ENCODE measurements at regions of chr17 and their contacts with region 1.

Region 1: DNA sequence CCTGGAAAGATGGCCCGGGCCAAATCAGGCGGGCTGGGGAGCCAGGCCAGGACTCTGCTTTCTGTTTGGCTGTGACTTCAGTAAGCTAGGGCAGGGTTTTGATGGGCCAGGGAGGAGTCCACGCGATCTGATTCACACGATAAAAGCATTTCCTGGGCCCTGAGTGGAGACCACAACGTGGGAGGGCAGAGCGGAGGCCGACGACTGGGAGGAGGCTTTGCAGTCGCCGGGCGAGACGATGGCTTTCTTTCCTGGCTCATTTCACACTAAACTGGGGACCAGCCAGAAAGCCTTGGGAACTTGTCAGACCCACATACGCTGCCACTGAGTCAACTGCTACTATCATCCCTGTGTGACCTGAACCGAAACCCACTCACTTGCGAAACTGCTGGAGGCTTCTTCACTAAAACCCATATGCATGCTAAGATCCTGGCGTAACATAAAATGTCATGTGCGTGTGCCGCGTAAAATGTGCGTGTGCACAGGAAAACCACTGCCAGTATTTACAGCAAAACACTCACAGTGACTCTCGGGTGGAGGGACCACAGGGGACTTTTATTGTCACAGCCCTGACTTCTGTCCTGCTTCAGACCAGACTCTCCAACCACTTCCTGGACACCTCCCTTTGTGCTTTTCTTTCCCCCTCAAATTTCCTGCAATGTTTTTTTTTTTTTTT is 14.2 kb upstream of the RHBDF2 start:
- DNase-seq: peak; percentile 54
- ATAC-seq: peak; percentile 84
- H3K4me3 Mint-ChIP-seq: peak overlapping the region; percentile 71
- H3K27ac Mint-ChIP-seq: peak overlapping the region; percentile 93
- H3K4me1 Mint-ChIP-seq: peaks cover 23% of the 10 kb centered on the region
- H3K27me3 Mint-ChIP-seq: peaks cover under 1% of the 10 kb centered on the region
- CTCF ChIP-seq: no peak

Region 2: GRCh38 chr17:76103274-76104139 is 411.9 kb before region 1 on chr17 and contains the start of gene EXOC7:
- CTCF ChIA-PET with region 1: no interaction called
- POLR2A ChIA-PET with region 1: no interaction called
- intact Hi-C with region 1: loop called (anchors 10 kb)
- DNase-seq: peak; percentile 95
- ATAC-seq: peak; percentile 97
- H3K4me3 Mint-ChIP-seq: peak within 1 kb of the TSS; percentile 98
- H3K27ac Mint-ChIP-seq: peak within 1 kb of the TSS; percentile 91
- H3K4me1 Mint-ChIP-seq: peaks cover 20% of the 10 kb centered on the region
- H3K27me3 Mint-ChIP-seq: no peaks in the 10 kb centered on the region
- CTCF ChIP-seq: no peak
- total RNA-seq, gene EXOC7: 133 and 146 TPM in 2 replicates

Region 3: GRCh38 chr17:76182016-76182764 is 333.2 kb before region 1 on chr17:
- CTCF ChIA-PET with region 1: no interaction called
- POLR2A ChIA-PET with region 1: no interaction called
- intact Hi-C with region 1: no loop called
- DNase-seq: peak; percentile 87
- ATAC-seq: peak; percentile 97
- H3K4me3 Mint-ChIP-seq: no peak overlapping the region
- H3K27ac Mint-ChIP-seq: no peak overlapping the region
- H3K4me1 Mint-ChIP-seq: peaks cover 34% of the 10 kb centered on the region
- H3K27me3 Mint-ChIP-seq: no peaks in the 10 kb centered on the region
- CTCF ChIP-seq: peak; percentile 21

Region 4: GRCh38 chr17:76481071-76481655 is 34.2 kb before region 1 on chr17:
- CTCF ChIA-PET with region 1: no interaction called
- POLR2A ChIA-PET with region 1: interaction called, 12 read pairs
- intact Hi-C with region 1: no loop called
- DNase-seq: peak; percentile 61
- ATAC-seq: peak; percentile 64
- H3K4me3 Mint-ChIP-seq: peak overlapping the region; percentile 81
- H3K27ac Mint-ChIP-seq: peak overlapping the region; percentile 92
- H3K4me1 Mint-ChIP-seq: peaks cover 79% of the 10 kb centered on the region
- H3K27me3 Mint-ChIP-seq: no peaks in the 10 kb centered on the region
- CTCF ChIP-seq: no peak

Region 5: DNA sequence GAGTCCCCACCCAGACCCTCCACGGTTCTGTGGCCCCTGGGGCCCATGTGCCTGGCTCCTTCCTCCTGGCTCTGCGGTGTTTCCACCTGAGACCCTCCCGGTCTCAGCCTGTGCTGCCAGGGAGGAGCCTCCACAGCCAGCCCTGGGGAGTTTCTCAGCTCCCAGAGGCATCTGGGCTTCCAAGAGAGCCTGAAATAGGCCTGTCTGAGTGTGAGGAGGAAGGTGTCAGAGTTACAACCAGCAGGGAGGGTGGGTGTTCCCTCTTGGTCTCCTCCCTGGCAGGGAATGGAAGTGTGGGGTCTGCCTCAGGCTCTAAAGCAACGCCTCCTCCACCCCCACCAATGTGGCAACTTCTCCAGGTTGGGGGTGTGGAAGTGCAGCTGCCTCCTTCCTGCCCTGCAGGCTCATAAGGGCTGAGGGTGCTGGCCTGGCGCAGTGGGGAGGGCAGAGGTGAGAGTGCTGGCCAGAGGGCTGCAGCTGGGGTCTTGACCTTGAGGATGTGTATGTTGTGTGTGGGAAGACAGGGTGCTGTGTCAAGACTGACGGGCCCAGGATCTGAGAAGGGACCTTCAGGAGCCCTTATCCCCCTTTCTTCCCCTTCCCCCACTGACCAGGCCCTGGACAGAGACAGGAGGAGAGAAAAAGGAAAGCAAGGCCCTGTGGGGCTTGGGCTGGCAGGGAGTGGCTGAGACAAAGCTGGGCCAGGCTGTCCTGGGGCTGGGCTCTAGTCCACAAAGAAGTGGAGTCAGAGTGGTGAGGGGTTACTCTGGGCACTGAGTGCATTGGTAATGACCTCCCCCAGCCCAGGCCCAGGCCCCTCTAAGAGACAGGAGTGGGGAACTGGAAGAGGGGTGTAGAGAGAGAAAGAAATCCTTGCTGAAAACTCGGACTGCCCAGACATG is 19.7 kb after region 1 on chr17:
- CTCF ChIA-PET with region 1: no interaction called
- POLR2A ChIA-PET with region 1: no interaction called
- intact Hi-C with region 1: no loop called
- DNase-seq: no peak
- ATAC-seq: no peak
- H3K4me3 Mint-ChIP-seq: no peak overlapping the region
- H3K27ac Mint-ChIP-seq: no peak overlapping the region
- H3K4me1 Mint-ChIP-seq: peaks cover 32% of the 10 kb centered on the region
- H3K27me3 Mint-ChIP-seq: peaks cover 16% of the 10 kb centered on the region
- CTCF ChIP-seq: no peak

Region 6: DNA sequence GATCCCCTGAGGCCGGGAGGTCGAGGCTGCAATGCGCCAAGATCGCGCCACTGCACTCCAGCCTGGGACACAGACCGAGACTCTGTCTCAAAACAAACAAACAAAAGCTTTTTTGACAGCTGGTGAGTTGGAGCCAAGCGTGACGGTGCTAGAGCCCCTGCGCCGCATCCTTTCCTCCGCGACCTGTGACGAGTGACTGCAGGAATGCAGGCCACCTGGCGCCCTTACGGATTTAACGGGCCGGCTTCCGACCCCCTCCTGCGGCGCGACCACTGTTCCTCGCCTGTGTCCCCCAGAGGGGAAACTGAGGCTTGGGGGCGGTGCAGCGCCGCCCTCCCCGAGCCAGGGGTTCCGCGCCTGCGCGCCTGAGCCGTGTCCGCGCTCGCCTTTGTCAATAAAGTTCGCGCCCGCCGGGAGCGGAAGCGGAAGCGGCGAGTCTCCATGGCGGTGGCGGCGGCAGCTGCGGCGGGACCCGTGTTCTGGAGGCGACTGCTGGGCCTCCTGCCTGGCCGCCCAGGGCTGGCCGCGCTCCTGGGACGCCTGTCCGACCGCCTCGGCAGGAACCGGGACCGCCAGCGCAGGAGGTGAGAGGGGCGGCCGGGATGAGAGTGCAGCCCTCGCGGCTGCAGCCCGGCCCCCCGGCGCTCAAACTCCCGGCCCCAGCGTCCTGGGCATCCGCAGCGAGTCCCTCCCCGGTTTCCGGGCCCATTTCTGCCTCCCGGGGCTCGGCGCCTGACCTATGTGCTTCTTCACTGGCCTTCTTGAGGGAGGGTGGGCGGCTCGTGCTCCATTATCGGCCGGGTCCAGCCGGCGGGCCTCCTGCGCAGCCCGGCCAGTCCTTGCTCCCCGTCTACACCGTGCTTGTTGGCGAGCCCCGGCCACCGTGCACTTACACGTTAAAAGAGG is 1863.1 kb after region 1 on chr17 and contains the start of gene PGS1:
- CTCF ChIA-PET with region 1: no interaction called
- POLR2A ChIA-PET with region 1: interaction called, 15 read pairs
- intact Hi-C with region 1: no loop called
- DNase-seq: peak; percentile 80
- ATAC-seq: peak; percentile 65
- H3K4me3 Mint-ChIP-seq: peak within 1 kb of the TSS; percentile 92
- H3K27ac Mint-ChIP-seq: peak within 1 kb of the TSS; percentile 77
- H3K4me1 Mint-ChIP-seq: peaks cover 45% of the 10 kb centered on the region
- H3K27me3 Mint-ChIP-seq: no peaks in the 10 kb centered on the region
- CTCF ChIP-seq: no peak
- total RNA-seq, gene PGS1: 55.2 and 76.1 TPM in 2 replicates